Left ventricle myocardium inferior (tissue), 1 donor: ENCODE measurements at regions of chr6 and their contacts with region 1.

Region 1: DNA sequence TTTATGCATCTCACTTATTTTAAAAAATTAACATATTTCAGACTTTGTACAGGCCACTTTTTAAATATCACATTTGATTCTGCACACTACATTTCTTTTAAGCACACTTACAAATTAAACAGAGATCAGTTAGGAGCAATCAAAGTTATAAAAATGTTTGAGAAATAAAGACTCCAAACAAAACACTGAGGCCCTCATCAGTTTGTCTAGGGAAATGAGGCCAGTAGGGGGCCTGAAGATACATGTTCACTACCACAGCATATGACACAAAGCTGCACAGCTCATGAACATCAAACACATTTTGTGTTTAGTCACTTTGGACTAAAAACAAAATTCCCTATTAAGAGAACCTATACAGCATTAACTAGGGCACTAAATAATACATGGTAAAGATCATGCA is 180.5 kb downstream of the PDE7B start:
- DNase-seq: no peak
- H3K4me3 ChIP-seq: no peak overlapping the region
- H3K27ac ChIP-seq: peak overlapping the region; percentile 26
- H3K4me1 ChIP-seq: peaks cover 46% of the 10 kb centered on the region
- H3K27me3 ChIP-seq: no peaks in the 10 kb centered on the region
- CTCF ChIP-seq: peak; percentile 73

Region 2: DNA sequence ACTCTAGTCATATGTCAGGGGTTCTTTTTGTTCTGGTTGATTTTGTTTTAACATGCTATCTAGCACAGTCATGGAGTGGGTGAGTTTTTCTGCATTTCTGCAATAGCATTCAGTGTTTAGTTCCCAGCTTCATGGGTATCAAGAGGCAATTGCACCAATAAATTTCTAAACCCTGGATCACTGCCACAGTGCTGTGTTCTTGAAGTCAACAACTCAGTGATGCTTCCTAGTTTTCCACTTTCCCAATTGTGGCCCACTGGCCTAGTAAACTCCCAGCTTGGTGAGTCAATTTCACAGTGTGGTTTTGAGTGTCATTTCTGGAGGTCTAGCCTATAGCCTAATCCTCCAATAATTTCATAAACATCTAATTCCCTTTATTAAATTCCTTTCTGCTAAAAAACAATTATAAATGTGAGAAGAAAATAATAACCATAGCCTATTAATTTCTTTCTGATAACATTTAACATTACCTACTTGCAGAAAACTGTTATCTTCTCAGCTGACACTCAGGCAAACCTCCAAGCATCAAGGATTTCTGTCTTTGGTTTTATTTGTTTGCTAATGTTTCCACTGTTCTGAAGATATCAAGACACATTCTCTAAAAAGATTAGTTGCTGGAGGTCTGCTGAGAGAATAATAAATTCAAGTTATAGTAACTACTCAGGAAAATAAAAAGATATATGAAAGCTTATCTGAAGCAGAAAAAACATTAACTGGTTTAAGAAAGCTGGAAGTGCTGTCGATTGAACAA is 90.5 kb before region 1 on chr6:
- intact Hi-C with region 1: no loop called
- DNase-seq: no peak
- H3K4me3 ChIP-seq: no peak overlapping the region
- H3K27ac ChIP-seq: no peak overlapping the region
- H3K4me1 ChIP-seq: peaks cover 7% of the 10 kb centered on the region
- H3K27me3 ChIP-seq: no peaks in the 10 kb centered on the region
- CTCF ChIP-seq: no peak

Region 3: GRCh38 chr6:136103763-136104311 is 71.9 kb after region 1 on chr6:
- intact Hi-C with region 1: loop called (anchors 10 kb)
- DNase-seq: peak; percentile 84
- H3K4me3 ChIP-seq: peak overlapping the region; percentile 35
- H3K27ac ChIP-seq: peak overlapping the region; percentile 91
- H3K4me1 ChIP-seq: peaks cover 83% of the 10 kb centered on the region
- H3K27me3 ChIP-seq: no peaks in the 10 kb centered on the region
- CTCF ChIP-seq: no peak